Right ventricle myocardium inferior (tissue), 1 donor: ENCODE measurements at regions of chr12 and their contacts with region 1.

Region 1: DNA sequence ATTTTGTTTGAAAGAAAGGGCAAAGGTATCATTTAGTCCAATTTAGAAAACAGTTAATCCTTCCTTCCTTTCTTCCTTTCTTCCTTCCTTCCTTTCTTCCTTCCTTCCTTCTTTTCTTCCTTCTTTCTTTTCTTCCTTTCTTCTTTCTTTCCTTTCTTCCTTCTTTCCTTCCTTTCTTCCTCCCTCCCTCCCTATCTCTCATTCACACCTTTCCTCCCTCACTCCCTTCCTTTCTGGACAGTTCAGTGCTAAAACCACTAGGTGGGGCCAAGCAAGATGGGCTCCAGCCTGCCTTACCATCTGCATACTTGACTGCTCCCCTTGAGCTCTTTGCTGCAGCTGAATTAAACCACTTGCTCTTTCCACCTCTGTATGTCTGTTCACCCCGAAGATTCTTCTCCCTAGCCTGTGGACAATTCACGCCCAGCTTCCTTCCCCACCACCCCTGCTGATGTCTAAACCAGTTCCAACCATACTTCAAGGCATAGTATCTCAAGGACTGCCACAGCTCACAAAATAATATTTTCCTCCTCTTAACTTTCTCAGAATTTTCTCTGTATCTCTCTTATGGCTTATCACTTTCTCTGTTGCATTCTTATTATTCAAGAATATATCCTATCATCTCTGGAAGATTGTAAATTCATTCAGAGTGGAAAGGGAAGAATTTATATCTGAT is 78.0 kb downstream of the DBX2 start:
- DNase-seq: no peak
- ATAC-seq: no peak

Region 2: GRCh38 chr12:45122768-45123380 is 150.0 kb after region 1 on chr12:
- intact Hi-C with region 1: loop called (anchors 10 kb)
- DNase-seq: no peak
- ATAC-seq: no peak